HEK293 (cell line): ENCODE measurements at regions of chr1 and their contacts with region 1.

Region 1: GRCh38 chr1:52460694-52461093 is 56.3 kb downstream of the PRPF38A start:
- H3K4me3 ChIP-seq: no peak overlapping the region
- H3K27ac ChIP-seq: no peak overlapping the region
- H3K4me1 ChIP-seq: no peaks in the 10 kb centered on the region
- CTCF ChIP-seq: no peak

Region 2: GRCh38 chr1:51799372-51799771 is 661.3 kb before region 1 on chr1:
- CTCF ChIA-PET with region 1: no interaction called
- POLR2A ChIA-PET with region 1: interaction called, 10 read pairs
- H3K4me3 ChIP-seq: no peak overlapping the region
- H3K27ac ChIP-seq: no peak overlapping the region
- H3K4me1 ChIP-seq: no peaks in the 10 kb centered on the region
- CTCF ChIP-seq: no peak